Posterior cingulate gyrus (tissue), 11 donors: ENCODE measurements at regions of chr1 and their contacts with region 1.

Region 1: GRCh38 chr1:205791568-205792180 is 16.4 kb upstream of the RAB29 start:
- DNase-seq: peak; percentile 42 to 95 (median 78)

Region 2: DNA sequence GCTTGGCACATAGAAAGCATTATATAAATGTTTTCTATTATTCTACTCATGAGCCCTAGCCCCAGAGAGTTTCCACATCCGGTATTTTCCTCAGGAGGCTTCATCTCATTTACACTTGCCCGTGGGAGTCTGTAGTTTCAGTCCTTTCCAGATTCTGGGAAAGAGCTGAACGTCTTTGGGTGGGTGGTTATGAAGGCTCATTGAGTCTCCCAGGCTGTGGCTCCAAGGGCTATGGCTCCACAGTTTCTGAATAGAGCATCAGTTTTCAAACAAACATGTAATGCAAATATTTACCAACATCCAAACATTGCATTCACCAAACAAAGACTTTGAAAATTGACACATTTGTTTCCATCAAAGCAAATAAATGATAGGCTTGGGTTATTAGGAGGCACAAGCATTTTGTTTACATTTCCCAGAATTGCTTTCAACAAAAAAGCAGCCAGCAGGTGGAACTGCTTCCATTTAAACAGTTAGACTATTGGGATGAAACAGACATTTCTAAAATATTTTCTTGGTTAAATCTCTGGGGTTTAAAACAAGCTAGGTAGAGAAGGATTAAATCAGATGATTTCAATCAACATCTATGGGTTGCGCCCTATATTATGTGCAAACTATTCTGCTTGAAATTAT is 368.6 kb before region 1 on chr1:
- intact Hi-C with region 1: no loop called
- DNase-seq: no peak

Region 3: GRCh38 chr1:205840146-205840923 is 48.7 kb after region 1 on chr1:
- intact Hi-C with region 1: loop called (anchors 5 kb)
- DNase-seq: no peak

Region 4: GRCh38 chr1:205919026-205919746 is 127.5 kb after region 1 on chr1:
- intact Hi-C with region 1: loop called (anchors 5 kb)
- DNase-seq: peak; percentile 72 to 97 (median 90)

Region 5: DNA sequence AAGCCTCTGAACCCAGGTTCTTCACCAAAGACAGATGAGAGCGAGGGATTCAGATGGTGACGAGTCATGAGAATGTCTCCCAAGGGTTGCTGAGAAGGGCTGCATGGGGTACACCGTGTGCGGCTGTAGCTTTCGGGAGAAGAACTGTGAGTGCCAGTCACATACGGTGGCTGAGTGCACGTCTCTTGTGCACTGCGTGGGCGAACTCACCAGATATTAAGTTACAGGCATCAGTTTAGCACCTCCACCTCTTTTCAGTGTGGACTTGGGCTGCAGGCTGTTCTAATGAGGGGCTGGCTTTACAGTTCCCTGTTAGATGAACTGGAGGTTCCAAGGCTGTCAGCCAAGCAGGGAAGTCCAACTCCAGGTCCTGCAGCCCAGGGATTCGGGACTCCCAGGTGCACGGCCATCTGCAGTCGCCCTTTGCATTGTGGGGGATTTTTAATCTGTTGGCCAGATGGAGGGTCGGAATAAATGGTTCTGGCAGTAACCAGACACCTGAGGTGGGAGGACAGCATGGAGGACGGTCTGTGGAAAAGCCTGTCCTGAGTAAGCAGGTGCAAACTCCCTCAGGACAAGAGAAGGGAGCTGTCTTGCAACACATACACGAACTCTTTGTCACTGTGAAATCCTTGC is 352.0 kb after region 1 on chr1:
- intact Hi-C with region 1: no loop called
- DNase-seq: no peak